ENCODE measurements at regions of chr10 and their contacts with region 1.

Region 1: DNA sequence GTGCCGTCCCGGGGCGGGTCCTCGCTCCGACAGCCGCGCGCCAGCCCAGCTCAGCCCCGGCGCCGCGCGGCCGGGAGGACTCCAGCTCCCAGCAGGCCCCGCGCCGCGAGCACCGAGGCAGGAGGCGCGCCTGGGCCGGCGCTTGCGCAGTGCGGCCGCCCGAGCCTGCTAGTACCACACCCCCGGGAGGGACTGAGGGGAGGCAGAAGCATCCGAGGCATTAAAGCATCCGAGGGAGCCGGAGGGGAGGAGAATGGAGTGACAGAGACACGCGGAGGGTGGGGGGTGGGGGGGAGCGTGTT is at the start of gene GRK5:
- DNase-seq: peak; percentile 97
- ATAC-seq: peak; percentile 97
- H3K4me3 ChIP-seq: peak within 1 kb of the TSS; percentile 79
- H3K27ac ChIP-seq: peak within 1 kb of the TSS; percentile 98
- H3K4me1 ChIP-seq: peaks cover 43% of the 10 kb centered on the region
- H3K27me3 ChIP-seq: no peaks in the 10 kb centered on the region
- CTCF ChIP-seq: no peak
- total RNA-seq, gene GRK5: 68.7 TPM

Region 2: DNA sequence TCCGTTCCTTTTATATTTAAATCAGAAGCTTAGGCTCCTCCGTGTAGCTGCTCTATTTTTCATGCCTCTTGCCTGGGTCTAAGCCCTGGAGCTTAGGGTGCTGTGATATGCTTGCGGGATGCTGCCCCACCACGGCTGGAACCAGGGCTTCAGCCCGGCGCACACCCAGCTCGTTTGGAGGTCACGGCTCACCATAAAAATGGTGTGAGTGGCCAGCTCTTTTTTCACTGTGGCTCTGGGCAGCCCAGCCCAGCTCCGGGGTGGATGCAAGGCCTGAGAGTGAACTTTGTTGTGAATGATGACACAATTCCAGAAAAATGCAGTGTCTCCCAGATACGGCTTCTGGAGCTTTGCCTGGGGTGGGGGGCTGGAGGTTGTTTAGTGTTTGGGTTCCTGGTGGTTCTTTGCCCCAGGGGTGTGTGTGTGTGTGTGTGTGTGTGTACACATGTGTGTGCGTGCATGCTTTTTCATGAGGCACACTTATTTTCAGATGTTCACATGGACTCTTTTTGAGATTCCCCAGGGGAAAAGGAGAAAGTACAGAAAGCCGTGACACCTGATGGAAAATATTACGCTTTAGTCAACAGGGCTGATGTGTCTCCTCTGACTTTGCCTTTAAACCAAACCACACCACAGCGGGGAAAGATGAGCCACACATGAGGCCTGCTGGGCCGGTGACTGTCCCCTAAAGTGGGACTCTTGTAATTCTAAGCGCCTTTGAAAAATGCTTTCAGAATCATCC is 46.3 kb after region 1 on chr10:
- intact Hi-C with region 1: loop called (anchors 10 kb)
- DNase-seq: no peak
- ATAC-seq: peak; percentile 59 to 69
- H3K4me3 ChIP-seq: no peak overlapping the region
- H3K27ac ChIP-seq: peak overlapping the region; percentile 76
- H3K4me1 ChIP-seq: peaks cover 68% of the 10 kb centered on the region
- H3K27me3 ChIP-seq: no peaks in the 10 kb centered on the region
- CTCF ChIP-seq: no peak

Region 3: GRCh38 chr10:119281581-119282071 is 74.3 kb after region 1 on chr10:
- intact Hi-C with region 1: no loop called
- DNase-seq: no peak
- ATAC-seq: no peak
- H3K4me3 ChIP-seq: no peak overlapping the region
- H3K27ac ChIP-seq: peak overlapping the region; percentile 65
- H3K4me1 ChIP-seq: peaks cover 73% of the 10 kb centered on the region
- H3K27me3 ChIP-seq: no peaks in the 10 kb centered on the region
- CTCF ChIP-seq: no peak

Measured in lower lobe of right lung (tissue), 2 donors.